ENCODE measurements at regions of chr6 and their contacts with region 1.

Region 1: DNA sequence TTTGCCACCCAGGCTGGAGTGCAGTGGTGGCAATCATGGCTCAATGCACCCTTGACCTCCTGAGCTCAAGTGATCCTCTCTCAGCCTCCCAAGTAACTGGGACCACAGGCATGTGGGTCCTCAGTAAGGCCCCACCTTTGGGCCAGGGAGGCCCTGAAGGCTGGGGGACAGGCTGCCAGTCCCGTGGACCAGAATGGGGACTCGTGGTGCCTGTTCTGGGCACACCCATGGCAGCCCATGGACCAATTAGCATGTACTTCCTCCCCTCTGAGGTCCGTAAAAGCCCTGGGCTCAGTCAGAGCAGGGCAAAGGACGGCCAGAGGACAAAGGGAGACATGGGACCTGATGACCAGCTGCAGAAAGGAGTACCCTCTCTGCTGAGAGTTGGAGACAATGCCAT is 1590.8 kb downstream of the KHDRBS2 start:
- DNase-seq: no peak
- ATAC-seq: no peak
- H3K4me3 Mint-ChIP-seq: no peak overlapping the region
- H3K27ac Mint-ChIP-seq: no peak overlapping the region
- H3K4me1 Mint-ChIP-seq: no peaks in the 10 kb centered on the region
- H3K27me3 Mint-ChIP-seq: no peaks in the 10 kb centered on the region

Region 2: GRCh38 chr6:60754879-60755278 is 59.6 kb after region 1 on chr6:
- CTCF ChIA-PET with region 1: no interaction called
- POLR2A ChIA-PET with region 1: no interaction called
- intact Hi-C with region 1: no loop called
- DNase-seq: no peak
- ATAC-seq: no peak
- H3K4me3 Mint-ChIP-seq: no peak overlapping the region
- H3K27ac Mint-ChIP-seq: no peak overlapping the region
- H3K4me1 Mint-ChIP-seq: no peaks in the 10 kb centered on the region
- H3K27me3 Mint-ChIP-seq: no peaks in the 10 kb centered on the region

Region 3: GRCh38 chr6:62129127-62129526 is 1433.9 kb after region 1 on chr6:
- CTCF ChIA-PET with region 1: no interaction called
- POLR2A ChIA-PET with region 1: no interaction called
- intact Hi-C with region 1: loop called in 1 of 2 experiments (anchors 5 kb)
- DNase-seq: no peak
- ATAC-seq: no peak
- H3K4me3 Mint-ChIP-seq: no peak overlapping the region
- H3K27ac Mint-ChIP-seq: no peak overlapping the region
- H3K4me1 Mint-ChIP-seq: no peaks in the 10 kb centered on the region
- H3K27me3 Mint-ChIP-seq: no peaks in the 10 kb centered on the region